MCF 10A (cell line): ENCODE measurements at regions of chr11 and their contacts with region 1.

Region 1: DNA sequence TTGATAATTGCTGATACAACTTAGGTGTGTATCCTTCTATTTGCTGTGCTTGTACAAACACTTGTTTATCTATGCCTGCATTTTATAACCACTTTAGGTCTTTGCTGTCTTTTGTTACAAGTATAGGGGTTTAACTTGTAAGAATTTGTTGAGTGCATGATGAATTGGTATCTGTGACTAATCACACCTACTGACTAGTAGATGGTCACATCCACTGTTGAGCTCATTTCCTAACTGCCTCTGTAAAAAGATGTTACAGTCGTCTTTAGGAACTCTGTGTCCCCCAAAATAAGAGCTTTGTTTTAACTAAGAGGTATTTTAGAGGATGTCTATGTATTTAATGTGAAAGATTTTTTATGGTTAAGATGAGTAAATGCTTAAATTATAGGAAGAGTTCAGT is 60.5 kb downstream of the HIPK3 start:
- DNase-seq: no peak
- H3K4me3 Mint-ChIP-seq: no peak overlapping the region
- H3K27ac Mint-ChIP-seq: no peak overlapping the region
- H3K4me1 Mint-ChIP-seq: peaks cover 5% of the 10 kb centered on the region
- H3K27me3 Mint-ChIP-seq: no peaks in the 10 kb centered on the region
- CTCF ChIP-seq: no peak

Region 2: DNA sequence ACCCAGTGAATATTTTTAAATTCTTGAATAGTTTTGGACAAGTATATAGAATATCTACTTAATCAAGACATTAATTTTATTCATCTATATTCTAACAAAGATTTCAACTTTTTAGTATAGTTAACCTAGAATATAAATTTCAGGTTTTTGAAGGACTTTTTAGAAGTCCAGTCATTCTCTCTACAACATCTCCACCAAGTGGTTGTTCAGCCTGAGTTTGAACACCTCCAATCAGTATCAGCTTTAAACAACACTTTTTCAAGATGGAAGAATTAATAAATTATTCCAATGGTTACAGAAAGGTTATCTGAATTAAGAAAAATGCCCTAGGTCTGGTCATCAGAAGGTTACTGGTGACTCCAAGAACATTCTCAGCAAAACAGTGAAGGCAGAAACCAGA is 702.2 kb before region 1 on chr11:
- CTCF ChIA-PET with region 1: no interaction called
- POLR2A ChIA-PET with region 1: no interaction called
- intact Hi-C with region 1: no loop called
- DNase-seq: peak; percentile 6
- H3K4me3 Mint-ChIP-seq: no peak overlapping the region
- H3K27ac Mint-ChIP-seq: no peak overlapping the region
- H3K4me1 Mint-ChIP-seq: no peaks in the 10 kb centered on the region
- H3K27me3 Mint-ChIP-seq: no peaks in the 10 kb centered on the region
- CTCF ChIP-seq: peak; percentile 15

Region 3: GRCh38 chr11:33329705-33330329 is 12.2 kb after region 1 on chr11:
- CTCF ChIA-PET with region 1: interaction called, 21 read pairs
- POLR2A ChIA-PET with region 1: interaction called, 3 read pairs
- intact Hi-C with region 1: no loop called
- DNase-seq: peak; percentile 68
- H3K4me3 Mint-ChIP-seq: no peak overlapping the region
- H3K27ac Mint-ChIP-seq: peak overlapping the region; percentile 49
- H3K4me1 Mint-ChIP-seq: peaks cover 20% of the 10 kb centered on the region
- H3K27me3 Mint-ChIP-seq: no peaks in the 10 kb centered on the region
- CTCF ChIP-seq: peak; percentile 59

Region 4: GRCh38 chr11:33344611-33345010 is 26.9 kb after region 1 on chr11:
- CTCF ChIA-PET with region 1: no interaction called
- POLR2A ChIA-PET with region 1: no interaction called
- intact Hi-C with region 1: no loop called
- DNase-seq: no peak
- H3K4me3 Mint-ChIP-seq: no peak overlapping the region
- H3K27ac Mint-ChIP-seq: no peak overlapping the region
- H3K4me1 Mint-ChIP-seq: no peaks in the 10 kb centered on the region
- H3K27me3 Mint-ChIP-seq: no peaks in the 10 kb centered on the region
- CTCF ChIP-seq: no peak